CD4-positive, alpha-beta T cell (primary cell): ENCODE measurements at regions of chr12 and their contacts with region 1.

Region 1: DNA sequence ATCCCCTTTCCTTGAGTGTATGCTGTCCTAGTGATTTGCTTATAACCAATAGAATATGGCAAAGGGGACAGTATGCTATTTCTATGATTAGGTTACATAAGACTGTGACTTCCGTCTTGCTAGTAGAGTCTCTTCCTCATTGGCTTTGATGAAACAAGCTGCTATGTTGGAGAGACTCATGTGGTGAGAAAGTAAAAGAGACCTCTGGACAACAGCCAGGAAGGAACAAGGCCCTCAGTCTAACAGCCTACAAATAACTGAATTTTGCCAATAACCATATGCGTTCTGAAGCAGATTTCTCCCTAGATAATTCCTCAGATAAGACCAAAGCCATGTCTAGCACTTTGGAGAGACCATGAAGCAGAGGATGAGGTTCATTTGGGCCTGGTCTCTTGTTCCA is 134.5 kb upstream of the NAV3 start:
- DNase-seq: no peak
- ATAC-seq: no peak
- H3K4me3 ChIP-seq: no peak overlapping the region
- H3K4me3 Mint-ChIP-seq: no peak overlapping the region
- H3K27ac ChIP-seq: no peak overlapping the region
- H3K27ac Mint-ChIP-seq: no peak overlapping the region
- H3K4me1 ChIP-seq: no peaks in the 10 kb centered on the region
- H3K4me1 Mint-ChIP-seq: no peaks in the 10 kb centered on the region
- H3K27me3 ChIP-seq: no peaks in the 10 kb centered on the region
- H3K27me3 Mint-ChIP-seq: no peaks in the 10 kb centered on the region
- CTCF ChIP-seq: no peak

Region 2: DNA sequence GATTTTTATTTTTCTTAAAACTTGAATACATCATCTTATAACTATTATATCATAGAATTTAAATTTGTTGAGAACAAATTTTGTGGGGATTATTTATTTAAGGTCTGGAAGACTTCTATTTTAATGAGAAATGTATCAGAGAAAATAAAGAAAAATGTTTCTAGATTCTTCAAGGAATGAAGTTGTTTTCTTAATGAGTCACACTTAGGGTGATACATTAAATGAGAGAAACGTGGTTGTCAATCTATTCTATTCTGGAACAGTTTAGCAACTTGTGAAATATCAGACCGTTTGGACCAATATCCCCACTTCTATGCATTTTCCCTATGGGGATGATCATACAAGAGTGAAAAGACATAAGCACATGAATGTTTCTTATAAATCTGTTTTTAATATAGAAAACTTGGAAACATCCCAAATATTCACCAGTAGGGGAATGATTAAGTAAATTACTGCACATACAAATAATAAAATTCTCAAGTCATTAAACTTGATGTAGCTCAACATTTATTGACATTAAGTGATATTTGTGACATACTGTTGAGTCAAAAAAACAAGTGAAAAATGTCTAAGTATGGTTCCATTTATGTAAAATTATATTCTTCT is 719.3 kb before region 1 on chr12:
- CTCF ChIA-PET with region 1: no interaction called
- POLR2A ChIA-PET with region 1: no interaction called
- intact Hi-C with region 1: loop called in 1 of 2 experiments (anchors 10 kb)
- DNase-seq: no peak
- ATAC-seq: no peak
- H3K4me3 ChIP-seq: no peak overlapping the region
- H3K4me3 Mint-ChIP-seq: no peak overlapping the region
- H3K27ac ChIP-seq: no peak overlapping the region
- H3K27ac Mint-ChIP-seq: no peak overlapping the region
- H3K4me1 ChIP-seq: no peaks in the 10 kb centered on the region
- H3K4me1 Mint-ChIP-seq: peaks cover 10% of the 10 kb centered on the region
- H3K27me3 ChIP-seq: peaks cover 0 to 4% of the 10 kb centered on the region in 2 experiments
- H3K27me3 Mint-ChIP-seq: peaks cover 14% of the 10 kb centered on the region
- CTCF ChIP-seq: no peak

Region 3: DNA sequence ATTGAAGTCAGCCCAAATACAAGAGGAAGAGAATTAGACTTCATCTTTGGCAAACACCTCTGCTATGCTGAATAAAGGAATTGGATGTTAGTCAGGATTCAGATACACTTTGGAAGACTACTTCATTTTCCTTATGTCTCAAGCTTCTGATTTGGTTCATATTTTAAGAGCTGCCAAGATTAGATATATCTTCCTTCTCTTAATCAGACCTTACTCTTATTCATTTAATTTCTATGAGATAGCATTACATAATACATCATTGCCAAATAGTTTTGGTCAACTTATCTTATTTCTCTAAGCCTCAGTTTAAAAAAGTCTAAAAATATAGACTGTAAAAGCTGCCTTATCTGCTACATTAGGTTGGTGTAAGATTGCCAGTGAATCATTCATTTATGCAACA is 196.1 kb before region 1 on chr12:
- CTCF ChIA-PET with region 1: no interaction called
- POLR2A ChIA-PET with region 1: no interaction called
- intact Hi-C with region 1: no loop called
- DNase-seq: no peak
- ATAC-seq: no peak
- H3K4me3 ChIP-seq: no peak overlapping the region
- H3K4me3 Mint-ChIP-seq: no peak overlapping the region
- H3K27ac ChIP-seq: no peak overlapping the region
- H3K27ac Mint-ChIP-seq: no peak overlapping the region
- H3K4me1 ChIP-seq: no peaks in the 10 kb centered on the region
- H3K4me1 Mint-ChIP-seq: no peaks in the 10 kb centered on the region
- H3K27me3 ChIP-seq: no peaks in the 10 kb centered on the region
- H3K27me3 Mint-ChIP-seq: no peaks in the 10 kb centered on the region
- CTCF ChIP-seq: no peak

Region 4: DNA sequence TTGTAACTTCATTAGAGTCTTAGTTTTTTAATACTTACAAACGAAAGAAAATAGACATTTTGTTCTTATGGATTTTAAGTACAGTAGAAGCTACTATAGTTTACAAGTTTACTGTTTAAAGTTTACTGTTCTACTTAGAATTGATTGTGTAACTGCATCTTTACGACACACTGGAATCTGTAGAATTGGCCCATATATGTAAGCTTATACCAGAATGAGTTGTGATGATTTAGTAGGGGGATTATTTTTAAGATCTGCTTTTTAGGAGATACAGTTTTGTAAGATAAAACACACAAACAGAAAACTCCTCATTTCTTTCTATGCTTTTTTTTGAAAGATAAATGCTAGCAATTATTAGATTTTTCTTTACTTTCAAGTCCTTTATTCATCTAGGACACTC is 104.3 kb after region 1 on chr12:
- CTCF ChIA-PET with region 1: no interaction called
- POLR2A ChIA-PET with region 1: no interaction called
- intact Hi-C with region 1: no loop called
- DNase-seq: no peak
- ATAC-seq: no peak
- H3K4me3 ChIP-seq: no peak overlapping the region
- H3K4me3 Mint-ChIP-seq: no peak overlapping the region
- H3K27ac ChIP-seq: no peak overlapping the region
- H3K27ac Mint-ChIP-seq: no peak overlapping the region
- H3K4me1 ChIP-seq: no peaks in the 10 kb centered on the region
- H3K4me1 Mint-ChIP-seq: no peaks in the 10 kb centered on the region
- H3K27me3 ChIP-seq: no peaks in the 10 kb centered on the region
- H3K27me3 Mint-ChIP-seq: no peaks in the 10 kb centered on the region
- CTCF ChIP-seq: no peak